GM12878 (cell line): ENCODE measurements at regions of chr10 and their contacts with region 1.

Region 1: GRCh38 chr10:117496616-117497028 is 45.9 kb upstream of the EMX2 start:
- DNase-seq: no peak
- ATAC-seq: peak; percentile 87
- H3K4me3 ChIP-seq: no peak overlapping the region
- H3K27ac ChIP-seq: no peak overlapping the region
- H3K4me1 ChIP-seq: no peaks in the 10 kb centered on the region
- H3K27me3 ChIP-seq: peaks cover 0 to 2% of the 10 kb centered on the region in 2 experiments; a peak in 2 of 4 replicates
- CTCF ChIP-seq: peak; percentile 91 to 97 (median 91)
- EP300 ChIP-seq: no peak
- POLR2A ChIP-seq: no peak
- RAD21 ChIP-seq: peak; percentile 98

Region 2: DNA sequence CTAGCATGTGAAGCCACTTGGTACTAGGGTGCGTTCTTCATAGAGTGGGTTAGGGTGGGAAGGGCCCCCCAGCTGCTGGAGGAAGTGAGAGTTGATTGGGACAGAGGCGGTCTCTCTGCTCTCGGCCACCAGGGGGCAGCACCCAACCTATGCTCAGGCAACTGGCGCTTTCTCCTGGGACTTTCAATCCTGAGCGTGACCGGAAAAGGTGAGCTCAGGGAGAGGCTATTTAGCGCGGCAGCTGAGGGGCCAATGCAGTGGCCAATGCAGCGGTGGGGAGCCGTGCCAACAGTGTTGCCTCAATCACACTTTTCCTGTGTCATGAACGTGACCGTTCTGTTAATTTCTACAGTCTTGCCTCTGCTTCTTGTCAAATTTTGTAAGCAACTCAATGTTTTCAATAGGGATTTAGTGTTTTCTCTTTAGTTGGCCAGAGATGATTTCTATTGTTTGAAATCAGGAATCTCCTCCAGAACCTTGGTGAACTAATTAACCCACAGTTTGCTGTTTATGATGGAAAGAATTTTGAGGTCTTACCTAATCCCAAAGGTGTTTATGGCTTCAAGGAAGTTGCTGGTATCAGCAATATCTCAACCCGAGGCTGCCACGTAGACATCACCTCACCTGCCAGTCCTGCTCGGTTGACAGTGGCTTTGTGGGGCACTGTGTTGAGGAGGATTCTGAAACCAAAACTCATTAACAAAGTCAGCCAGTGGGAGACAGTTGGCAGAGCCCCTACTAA is 53.5 kb before region 1 on chr10:
- CTCF ChIA-PET with region 1: interaction called, 35 read pairs
- POLR2A ChIA-PET with region 1: interaction called, 3 read pairs
- RAD21 ChIA-PET with region 1: interaction called, 18 read pairs
- SMC1A ChIA-PET with region 1: interaction called, 18 read pairs
- in situ Hi-C with region 1: no loop called
- intact Hi-C with region 1: no loop called
- DNase-seq: peak; percentile 16
- ATAC-seq: peak; percentile 90
- H3K4me3 ChIP-seq: no peak overlapping the region
- H3K27ac ChIP-seq: no peak overlapping the region
- H3K4me1 ChIP-seq: 0 out of 2 replicates have a peak, but pooled peaks cover 5% of the 10 kb centered on the region
- H3K27me3 ChIP-seq: no peaks in the 10 kb centered on the region; a peak in 1 of 4 replicates
- CTCF ChIP-seq: peak; percentile 70 to 80 (median 79)
- EP300 ChIP-seq: no peak
- POLR2A ChIP-seq: no peak
- RAD21 ChIP-seq: peak; percentile 35

Region 3: GRCh38 chr10:117537436-117537903 is 40.8 kb after region 1 on chr10:
- CTCF ChIA-PET with region 1: interaction called, 31 read pairs
- POLR2A ChIA-PET with region 1: no interaction called
- RAD21 ChIA-PET with region 1: interaction called, 13 read pairs
- SMC1A ChIA-PET with region 1: interaction called, 12 read pairs
- in situ Hi-C with region 1: no loop called
- intact Hi-C with region 1: no loop called
- DNase-seq: no peak
- ATAC-seq: peak; percentile 80
- H3K4me3 ChIP-seq: no peak overlapping the region
- H3K27ac ChIP-seq: no peak overlapping the region
- H3K4me1 ChIP-seq: peaks cover 7% of the 10 kb centered on the region
- H3K27me3 ChIP-seq: peaks cover 13 to 23% of the 10 kb centered on the region in 2 experiments
- CTCF ChIP-seq: peak; percentile 61 to 71 (median 67); a peak in 5 of 6 replicates
- EP300 ChIP-seq: no peak
- POLR2A ChIP-seq: no peak
- RAD21 ChIP-seq: peak; percentile 88

Region 4: GRCh38 chr10:117553142-117553814 is 56.7 kb after region 1 on chr10:
- CTCF ChIA-PET with region 1: no interaction called
- POLR2A ChIA-PET with region 1: no interaction called
- RAD21 ChIA-PET with region 1: no interaction called
- SMC1A ChIA-PET with region 1: no interaction called
- in situ Hi-C with region 1: no loop called
- intact Hi-C with region 1: no loop called
- DNase-seq: no peak
- ATAC-seq: no peak
- H3K4me3 ChIP-seq: no peak overlapping the region
- H3K27ac ChIP-seq: no peak overlapping the region
- H3K4me1 ChIP-seq: no peaks in the 10 kb centered on the region
- H3K27me3 ChIP-seq: peaks cover 25 to 26% of the 10 kb centered on the region in 2 experiments
- CTCF ChIP-seq: no peak
- EP300 ChIP-seq: no peak
- POLR2A ChIP-seq: no peak
- RAD21 ChIP-seq: no peak

Region 5: DNA sequence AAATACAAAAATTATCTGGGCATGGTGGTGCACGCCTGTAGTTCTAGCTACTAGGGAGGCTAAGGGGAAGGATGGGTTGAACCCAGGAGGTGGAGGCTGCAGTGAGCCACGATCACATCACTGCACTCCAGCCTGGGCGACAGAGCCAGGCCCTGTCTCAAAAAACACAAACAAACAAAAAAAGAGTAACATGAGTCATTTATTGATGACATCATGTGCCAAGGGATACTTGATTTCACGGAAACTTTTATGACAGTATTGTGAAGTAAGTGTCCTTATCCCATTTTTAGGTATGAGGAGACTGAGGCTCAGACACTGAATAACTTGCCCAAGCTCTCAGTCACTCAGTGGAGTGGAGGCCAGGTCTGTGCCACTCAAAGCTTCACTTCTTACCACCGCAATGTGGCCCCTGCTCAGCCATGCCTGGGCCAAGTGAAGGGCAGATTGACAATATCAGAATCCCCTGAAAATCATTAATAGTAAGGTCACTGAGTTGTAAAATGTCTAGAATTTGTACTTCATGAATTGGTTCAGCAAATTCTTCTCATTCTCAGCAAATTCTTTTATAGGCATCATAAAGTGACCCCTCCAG is 82.5 kb after region 1 on chr10:
- CTCF ChIA-PET with region 1: no interaction called
- POLR2A ChIA-PET with region 1: no interaction called
- RAD21 ChIA-PET with region 1: no interaction called
- SMC1A ChIA-PET with region 1: no interaction called
- in situ Hi-C with region 1: no loop called
- intact Hi-C with region 1: no loop called
- DNase-seq: no peak
- ATAC-seq: no peak
- H3K4me3 ChIP-seq: no peak overlapping the region
- H3K27ac ChIP-seq: no peak overlapping the region
- H3K4me1 ChIP-seq: no peaks in the 10 kb centered on the region
- H3K27me3 ChIP-seq: no peaks in the 10 kb centered on the region; a peak in 3 of 4 replicates
- CTCF ChIP-seq: no peak
- EP300 ChIP-seq: no peak
- POLR2A ChIP-seq: no peak
- RAD21 ChIP-seq: no peak

Region 6: DNA sequence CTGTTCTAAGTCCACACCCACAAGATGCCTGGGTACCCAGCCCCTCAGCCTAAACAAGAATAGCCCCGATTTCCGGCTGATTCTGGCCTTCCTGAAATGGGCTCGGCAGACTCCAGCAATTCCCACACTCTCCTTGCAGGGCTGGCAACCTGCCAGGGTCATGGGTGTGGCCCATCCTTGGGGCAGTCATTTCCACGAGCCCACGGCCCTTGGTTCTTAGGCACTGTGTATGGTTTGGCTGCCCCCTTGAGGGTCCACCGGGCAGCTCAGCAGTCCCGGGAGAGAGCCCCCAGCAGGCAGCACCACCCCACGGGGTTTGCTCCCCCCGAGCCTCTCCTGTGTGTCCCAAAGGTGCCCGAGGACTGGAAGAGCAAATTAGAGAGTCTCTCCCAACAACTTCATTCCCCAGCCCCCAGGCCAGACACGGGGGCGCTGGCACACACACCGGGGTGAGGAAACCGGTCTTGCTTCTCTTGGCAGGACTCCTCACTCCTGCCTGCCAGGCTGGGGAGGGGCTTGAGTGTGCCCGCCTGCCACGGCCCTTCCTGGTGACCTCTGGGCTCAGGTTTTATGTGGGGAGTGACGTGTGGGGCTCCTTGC is 188.2 kb after region 1 on chr10:
- CTCF ChIA-PET with region 1: interaction called, 8 read pairs
- POLR2A ChIA-PET with region 1: no interaction called
- RAD21 ChIA-PET with region 1: interaction called, 15 read pairs
- SMC1A ChIA-PET with region 1: interaction called, 4 read pairs
- in situ Hi-C with region 1: no loop called
- intact Hi-C with region 1: no loop called
- DNase-seq: no peak
- ATAC-seq: peak; percentile 68
- H3K4me3 ChIP-seq: no peak overlapping the region
- H3K27ac ChIP-seq: no peak overlapping the region
- H3K4me1 ChIP-seq: no peaks in the 10 kb centered on the region
- H3K27me3 ChIP-seq: peaks cover 0 to 12% of the 10 kb centered on the region in 2 experiments; a peak in 1 of 4 replicates
- CTCF ChIP-seq: peak; percentile 19 to 41 (median 39); a peak in 4 of 6 replicates
- EP300 ChIP-seq: no peak
- POLR2A ChIP-seq: no peak
- RAD21 ChIP-seq: peak; percentile 63

Region 7: DNA sequence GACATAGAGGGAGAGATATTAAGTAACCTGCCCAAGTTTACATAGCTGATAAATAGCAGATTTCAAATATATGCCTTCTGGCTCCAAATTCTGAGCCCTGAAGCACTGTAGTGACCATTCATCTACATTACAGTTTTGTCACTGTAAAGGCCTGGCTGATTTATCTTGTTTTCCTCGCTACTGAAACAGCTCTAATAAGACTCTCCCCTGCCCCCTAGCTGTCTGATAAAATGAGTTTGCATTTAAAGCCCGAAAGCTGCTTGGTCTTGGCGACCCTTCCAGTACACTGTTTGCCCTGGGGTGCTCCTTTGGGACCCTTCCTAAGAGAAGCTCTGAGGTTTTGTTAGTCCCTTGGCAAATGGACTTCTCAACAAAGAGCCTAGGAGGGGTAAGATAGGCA is 609.8 kb after region 1 on chr10:
- CTCF ChIA-PET with region 1: interaction called, 27 read pairs
- POLR2A ChIA-PET with region 1: no interaction called
- RAD21 ChIA-PET with region 1: interaction called, 10 read pairs
- SMC1A ChIA-PET with region 1: interaction called, 11 read pairs
- in situ Hi-C with region 1: no loop called
- intact Hi-C with region 1: loop called (anchors 2 kb)
- DNase-seq: no peak
- ATAC-seq: peak; percentile 70
- H3K4me3 ChIP-seq: no peak overlapping the region
- H3K27ac ChIP-seq: no peak overlapping the region
- H3K4me1 ChIP-seq: no peaks in the 10 kb centered on the region
- H3K27me3 ChIP-seq: no peaks in the 10 kb centered on the region; a peak in 1 of 4 replicates
- CTCF ChIP-seq: peak; percentile 39 to 59 (median 53); a peak in 5 of 6 replicates
- EP300 ChIP-seq: no peak
- POLR2A ChIP-seq: no peak
- RAD21 ChIP-seq: peak; percentile 66

Region 8: DNA sequence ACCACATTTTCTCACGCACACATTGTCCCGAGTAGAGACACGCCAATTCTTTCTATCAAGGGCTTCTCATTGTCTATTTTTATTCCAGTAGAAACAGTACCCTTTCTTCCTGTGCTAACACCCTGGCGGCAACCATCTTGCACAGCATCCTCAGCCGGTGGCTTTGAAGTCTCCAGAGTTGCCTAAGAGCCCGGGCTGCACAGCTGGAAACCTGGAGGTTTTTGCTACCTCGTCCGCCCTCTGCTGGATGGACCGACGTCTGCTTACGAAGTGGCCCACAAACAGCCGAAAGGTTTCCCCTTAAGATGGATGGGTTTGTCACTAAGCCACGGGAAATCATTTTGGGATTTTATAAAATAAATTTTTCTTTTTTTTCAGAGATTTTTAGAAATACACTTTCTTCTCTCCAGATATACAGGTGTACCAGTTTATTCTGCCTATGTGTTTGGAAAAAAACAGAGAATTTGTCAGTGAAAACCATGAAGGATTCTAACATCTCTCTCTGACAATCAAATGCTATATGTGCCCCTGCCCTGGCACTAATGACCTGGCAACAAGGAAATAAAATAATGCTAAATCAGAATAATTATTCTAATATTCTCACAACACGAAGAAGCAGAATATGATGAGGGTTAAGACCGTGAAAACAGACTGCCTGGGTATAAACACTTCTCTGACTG is 927.3 kb after region 1 on chr10:
- CTCF ChIA-PET with region 1: interaction called, 3 read pairs
- POLR2A ChIA-PET with region 1: no interaction called
- RAD21 ChIA-PET with region 1: interaction called, 5 read pairs
- SMC1A ChIA-PET with region 1: interaction called, 14 read pairs
- in situ Hi-C with region 1: no loop called
- intact Hi-C with region 1: loop called (anchors 10 kb)
- DNase-seq: no peak
- ATAC-seq: peak; percentile 96
- H3K4me3 ChIP-seq: no peak overlapping the region
- H3K27ac ChIP-seq: no peak overlapping the region
- H3K4me1 ChIP-seq: no peaks in the 10 kb centered on the region
- H3K27me3 ChIP-seq: no peaks in the 10 kb centered on the region
- CTCF ChIP-seq: peak; percentile 67 to 77 (median 77)
- EP300 ChIP-seq: no peak
- POLR2A ChIP-seq: no peak
- RAD21 ChIP-seq: peak; percentile 60